AG04449 (cell line): ENCODE measurements at regions of chr17 and their contacts with region 1.

Region 1: GRCh38 chr17:72556944-72557826 is 436.4 kb downstream of the SOX9 start:
- DNase-seq: no peak
- H3K4me3 ChIP-seq: no peak overlapping the region
- CTCF ChIP-seq: peak; percentile 84

Region 2: DNA sequence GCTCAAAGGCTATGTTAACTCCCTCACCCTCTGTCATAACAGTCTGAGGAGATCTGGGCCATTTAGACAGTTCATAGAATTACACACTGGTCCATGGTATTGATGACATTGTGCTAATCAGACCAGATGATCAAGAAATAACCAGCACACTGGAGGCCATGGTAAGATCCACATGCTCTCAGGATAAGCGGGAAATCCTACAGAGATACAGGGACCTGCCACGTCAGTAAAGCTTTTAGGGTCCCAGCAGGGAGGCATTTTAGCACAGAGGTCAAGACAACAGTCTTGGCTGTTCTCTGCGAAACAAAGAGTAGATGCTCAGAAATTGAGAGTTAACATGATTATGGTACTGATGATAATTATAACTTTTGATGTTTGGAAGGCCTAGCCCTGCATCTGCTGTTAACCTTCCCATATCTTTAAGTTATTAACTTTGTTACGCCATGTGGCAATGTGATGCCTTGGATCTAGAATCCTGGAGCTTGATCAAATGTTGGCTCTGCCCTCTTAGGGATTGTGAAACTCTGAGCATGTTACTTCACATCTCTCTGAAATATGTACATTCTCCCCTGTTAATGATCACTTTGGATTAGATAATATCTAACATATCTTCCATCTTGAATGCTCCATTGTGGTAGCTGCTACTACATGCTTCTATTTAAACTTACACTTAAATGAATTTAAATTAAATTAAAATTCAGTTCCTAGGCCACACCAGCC is 608.3 kb before region 1 on chr17:
- CTCF ChIA-PET with region 1: no interaction called
- POLR2A ChIA-PET with region 1: no interaction called
- DNase-seq: no peak
- H3K4me3 ChIP-seq: no peak overlapping the region
- CTCF ChIP-seq: no peak

Region 3: DNA sequence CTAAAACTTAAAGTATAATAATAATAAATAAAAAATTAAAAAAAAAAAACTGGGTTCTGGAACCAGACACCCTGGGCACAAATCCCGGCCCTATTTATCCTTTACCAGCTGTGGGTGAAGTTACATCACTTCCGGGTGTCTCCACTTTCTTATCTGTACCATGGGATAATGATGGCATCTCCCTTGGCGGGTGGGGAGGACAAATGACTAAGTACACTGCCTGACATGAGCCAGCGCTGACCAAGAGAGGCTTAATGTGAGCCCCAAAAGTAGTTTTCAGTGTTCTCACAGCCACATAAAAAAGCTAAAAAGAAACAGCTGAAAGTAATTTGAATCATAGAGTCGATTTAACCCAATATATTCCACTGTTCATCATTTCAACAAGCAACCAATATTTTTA is 11.4 kb before region 1 on chr17:
- CTCF ChIA-PET with region 1: interaction called, 30 read pairs
- POLR2A ChIA-PET with region 1: no interaction called
- DNase-seq: no peak
- H3K4me3 ChIP-seq: no peak overlapping the region
- CTCF ChIP-seq: no peak

Region 4: GRCh38 chr17:72592242-72592966 is 35.2 kb after region 1 on chr17:
- CTCF ChIA-PET with region 1: interaction called, 22 read pairs
- POLR2A ChIA-PET with region 1: interaction called, 3 read pairs
- DNase-seq: no peak
- H3K4me3 ChIP-seq: peak overlapping the region; percentile 96
- CTCF ChIP-seq: no peak

Region 5: GRCh38 chr17:72622661-72623433 is 65.7 kb after region 1 on chr17:
- CTCF ChIA-PET with region 1: interaction called, 46 read pairs
- POLR2A ChIA-PET with region 1: no interaction called
- DNase-seq: no peak
- H3K4me3 ChIP-seq: no peak overlapping the region
- CTCF ChIP-seq: no peak

Region 6: DNA sequence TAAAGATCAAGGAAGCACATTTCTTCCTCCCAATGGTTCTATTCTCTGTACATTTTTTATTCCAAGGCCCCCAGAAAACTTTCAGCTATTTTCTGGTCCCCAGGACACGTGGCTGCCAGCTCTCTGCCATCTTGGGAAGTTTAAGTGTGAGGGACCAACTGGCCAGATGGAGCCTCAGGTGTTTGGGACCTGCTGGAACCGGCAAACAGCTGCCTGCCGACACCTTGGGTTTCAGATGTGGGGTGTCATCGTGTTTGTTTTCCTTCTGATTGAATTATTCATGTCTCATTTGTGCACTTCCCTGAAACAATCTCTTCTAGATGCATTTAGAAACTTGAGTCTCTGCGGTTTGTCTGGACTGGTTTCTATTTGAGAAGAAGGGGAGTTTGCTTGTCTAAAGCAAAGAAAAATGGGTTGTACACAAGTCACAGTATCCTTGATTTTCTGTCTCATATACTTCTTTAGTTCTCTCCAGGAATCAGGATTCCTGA is 148.8 kb after region 1 on chr17:
- CTCF ChIA-PET with region 1: interaction called, 174 read pairs
- POLR2A ChIA-PET with region 1: no interaction called
- DNase-seq: no peak
- H3K4me3 ChIP-seq: no peak overlapping the region
- CTCF ChIP-seq: no peak

Region 7: DNA sequence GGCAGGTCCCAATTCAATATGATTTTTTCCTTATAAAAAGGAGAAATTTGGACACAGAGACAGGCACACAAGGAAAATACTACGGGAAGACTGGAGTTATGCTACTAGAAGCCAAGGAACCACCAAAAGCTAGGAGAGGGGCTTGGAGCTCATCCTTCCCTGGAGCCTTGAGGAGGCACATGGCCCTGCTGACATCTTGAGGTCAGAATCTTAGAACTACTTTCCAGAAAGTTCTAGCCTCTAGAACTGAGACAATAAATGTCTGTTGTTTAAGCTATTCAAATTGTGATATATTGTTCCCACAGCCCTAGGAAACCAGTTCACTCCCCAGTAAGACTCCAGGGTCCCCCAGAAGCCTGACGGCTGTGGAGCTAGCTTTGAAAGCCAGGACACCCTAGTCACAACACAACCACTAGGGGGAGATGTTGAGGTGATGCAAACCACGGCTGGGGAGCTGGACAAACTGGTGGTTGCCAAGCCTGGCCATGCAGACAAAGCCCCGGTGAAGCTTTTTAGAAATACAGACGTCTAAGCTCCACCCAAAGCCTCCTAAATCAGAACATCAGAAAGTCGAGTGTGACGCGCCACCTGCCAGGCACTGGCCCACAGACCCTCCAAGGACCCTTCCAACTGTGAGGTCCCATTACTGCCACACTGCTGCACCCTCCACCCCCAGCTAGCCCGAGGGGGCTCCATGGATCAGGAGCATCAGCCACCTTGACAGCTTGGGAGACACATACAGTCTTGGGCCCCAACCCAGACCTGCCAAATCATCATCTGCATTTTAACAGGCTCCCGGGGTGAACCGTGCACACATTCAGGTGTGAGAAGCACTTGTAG is 428.9 kb after region 1 on chr17:
- CTCF ChIA-PET with region 1: interaction called, 25 read pairs
- POLR2A ChIA-PET with region 1: no interaction called
- DNase-seq: no peak
- H3K4me3 ChIP-seq: no peak overlapping the region
- CTCF ChIP-seq: peak; percentile 91

Region 8: GRCh38 chr17:73247726-73248125 is 690.5 kb after region 1 on chr17:
- CTCF ChIA-PET with region 1: interaction called, 75 read pairs
- POLR2A ChIA-PET with region 1: no interaction called
- DNase-seq: no peak
- H3K4me3 ChIP-seq: no peak overlapping the region
- CTCF ChIP-seq: peak; percentile 12